ENCODE measurements at regions of chr12 and their contacts with region 1.

Region 1: GRCh38 chr12:109995686-109996482 is at the start of gene GIT2:
- DNase-seq: peak; percentile 85
- ATAC-seq: peak; percentile 84
- H3K4me3 ChIP-seq: peak within 1 kb of the TSS; percentile 86
- H3K27ac ChIP-seq: peak within 1 kb of the TSS; percentile 87
- H3K4me1 ChIP-seq: peaks cover 5% of the 10 kb centered on the region; the same call in 1 of the 2 replicates
- H3K27me3 ChIP-seq: no peaks in the 10 kb centered on the region
- CTCF ChIP-seq: no peak
- EP300 ChIP-seq: no peak
- POLR2A ChIP-seq: peak; percentile 89
- RAD21 ChIP-seq: no peak
- polyA plus RNA-seq, gene GIT2: 9.1 to 9.4 TPM

Region 2: GRCh38 chr12:109967383-109968031 is 28.4 kb before region 1 on chr12:
- CTCF ChIA-PET with region 1: interaction called, 3 read pairs
- POLR2A ChIA-PET with region 1: no interaction called
- RAD21 ChIA-PET with region 1: interaction called, 11 read pairs
- SMC1A ChIA-PET with region 1: interaction called, 6 read pairs
- in situ Hi-C with region 1: no loop called
- intact Hi-C with region 1: no loop called
- DNase-seq: no peak
- ATAC-seq: peak; percentile 54
- H3K4me3 ChIP-seq: no peak overlapping the region
- H3K27ac ChIP-seq: no peak overlapping the region; the same call in 1 of the 2 replicates
- H3K4me1 ChIP-seq: peaks cover 10% of the 10 kb centered on the region
- H3K27me3 ChIP-seq: no peaks in the 10 kb centered on the region
- CTCF ChIP-seq: no peak
- EP300 ChIP-seq: no peak
- POLR2A ChIP-seq: no peak
- RAD21 ChIP-seq: no peak

Region 3: GRCh38 chr12:110012137-110012536 is 16.3 kb after region 1 on chr12:
- CTCF ChIA-PET with region 1: interaction called, 8 read pairs
- POLR2A ChIA-PET with region 1: interaction called, 40 read pairs
- RAD21 ChIA-PET with region 1: interaction called, 31 read pairs
- SMC1A ChIA-PET with region 1: interaction called, 32 read pairs
- in situ Hi-C with region 1: no loop called
- intact Hi-C with region 1: no loop called
- DNase-seq: no peak
- ATAC-seq: peak; percentile 89
- H3K4me3 ChIP-seq: peak overlapping the region; percentile 58
- H3K27ac ChIP-seq: peak overlapping the region; percentile 83
- H3K4me1 ChIP-seq: peaks cover 40% of the 10 kb centered on the region
- H3K27me3 ChIP-seq: no peaks in the 10 kb centered on the region
- CTCF ChIP-seq: no peak
- EP300 ChIP-seq: no peak
- POLR2A ChIP-seq: no peak
- RAD21 ChIP-seq: no peak

Region 4: DNA sequence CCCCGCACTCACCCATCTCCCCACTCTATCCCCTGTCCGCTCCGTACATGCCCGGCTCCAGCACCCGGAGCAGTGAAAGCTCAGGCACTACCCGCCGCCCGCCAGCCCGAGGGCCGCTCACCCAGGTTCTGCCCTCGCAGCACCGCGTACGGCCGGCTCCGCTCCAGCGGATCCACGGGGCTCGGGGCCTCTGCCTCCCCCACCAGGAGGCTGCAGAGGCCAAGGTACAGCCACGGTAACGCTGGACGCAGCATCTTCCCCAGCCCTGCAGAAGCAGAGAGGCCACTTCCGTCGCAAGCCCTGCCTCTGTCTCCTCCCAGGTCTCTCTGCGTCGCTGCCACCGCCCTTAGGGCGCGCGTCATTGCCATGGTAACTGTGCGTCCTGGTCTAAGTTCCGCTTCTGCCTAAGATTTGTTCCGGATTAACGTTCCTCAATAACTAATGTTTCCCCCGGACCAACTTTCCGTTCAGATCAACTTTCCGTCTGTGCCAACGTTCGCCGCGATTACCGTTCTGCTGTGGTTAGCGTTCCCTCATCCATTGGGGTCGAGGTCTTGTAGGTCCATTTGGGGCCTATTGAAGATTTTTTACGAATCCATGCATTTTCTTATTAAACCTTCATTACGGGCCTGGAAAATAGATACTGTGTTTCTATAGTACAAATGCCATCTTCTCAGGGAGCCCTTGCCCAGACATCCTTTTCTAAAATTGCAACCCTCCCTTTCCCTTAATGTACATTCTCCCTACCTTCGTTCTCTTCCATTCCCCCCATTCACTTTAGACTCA is 52.6 kb after region 1 on chr12 and contains the start of gene C12orf76:
- CTCF ChIA-PET with region 1: interaction called, 4 read pairs
- POLR2A ChIA-PET with region 1: interaction called, 3 read pairs
- RAD21 ChIA-PET with region 1: interaction called, 3 read pairs
- SMC1A ChIA-PET with region 1: interaction called, 3 read pairs
- in situ Hi-C with region 1: no loop called
- intact Hi-C with region 1: loop called (anchors 2 kb)
- DNase-seq: peak; percentile 96
- ATAC-seq: peak; percentile 99
- H3K4me3 ChIP-seq: peak within 1 kb of the TSS; percentile 87
- H3K27ac ChIP-seq: peak within 1 kb of the TSS; percentile 77
- H3K4me1 ChIP-seq: peaks cover 29% of the 10 kb centered on the region
- H3K27me3 ChIP-seq: no peaks in the 10 kb centered on the region
- CTCF ChIP-seq: peak; percentile 9 to 27 (median 13); a peak in 2 of 6 replicates
- EP300 ChIP-seq: no peak
- POLR2A ChIP-seq: peak; percentile 82
- RAD21 ChIP-seq: peak; percentile 32; the same call in 1 of the 2 replicates
- polyA plus RNA-seq, gene C12orf76: 3.6 to 4.6 TPM

Measured in GM12878 (cell line).